ENCODE measurements at regions of chr6 and their contacts with region 1.

Region 1: DNA sequence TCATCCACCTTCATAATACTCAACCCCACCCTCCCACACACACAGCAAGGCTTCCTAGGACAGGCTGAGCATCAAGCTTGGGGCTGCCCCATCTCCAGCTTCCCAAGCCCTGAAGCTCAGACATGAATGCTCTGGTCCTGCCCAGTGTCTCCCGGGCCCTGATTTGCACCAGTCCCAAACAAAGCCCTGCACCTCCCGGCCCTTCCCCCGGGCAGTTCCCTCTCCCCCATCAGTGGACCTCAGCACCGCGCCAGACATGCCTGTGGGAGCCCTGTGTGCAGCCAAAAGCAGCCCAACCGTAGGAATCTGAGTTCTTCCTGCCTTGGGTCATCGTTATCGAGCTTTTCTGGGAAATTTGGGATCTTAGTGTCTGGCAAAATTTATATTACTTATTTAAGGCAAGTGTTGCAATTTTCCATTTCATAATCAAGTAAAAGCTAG is 63.5 kb downstream of the THBS2 start:
- DNase-seq: peak; percentile 90
- ATAC-seq: peak; percentile 97

Region 2: GRCh38 chr6:169070506-169071176 is 119.5 kb before region 1 on chr6:
- intact Hi-C with region 1: loop called (anchors 2 kb)
- DNase-seq: peak; percentile 89
- ATAC-seq: peak; percentile 95

Region 3: GRCh38 chr6:169167581-169168301 is 22.4 kb before region 1 on chr6:
- intact Hi-C with region 1: loop called (anchors 1 kb)
- DNase-seq: peak; percentile 86
- ATAC-seq: peak; percentile 84

Measured in Right ventricle myocardium inferior (tissue), 1 donor.